GM10248 (cell line): ENCODE measurements at regions of chr11 and their contacts with region 1.

Region 1: DNA sequence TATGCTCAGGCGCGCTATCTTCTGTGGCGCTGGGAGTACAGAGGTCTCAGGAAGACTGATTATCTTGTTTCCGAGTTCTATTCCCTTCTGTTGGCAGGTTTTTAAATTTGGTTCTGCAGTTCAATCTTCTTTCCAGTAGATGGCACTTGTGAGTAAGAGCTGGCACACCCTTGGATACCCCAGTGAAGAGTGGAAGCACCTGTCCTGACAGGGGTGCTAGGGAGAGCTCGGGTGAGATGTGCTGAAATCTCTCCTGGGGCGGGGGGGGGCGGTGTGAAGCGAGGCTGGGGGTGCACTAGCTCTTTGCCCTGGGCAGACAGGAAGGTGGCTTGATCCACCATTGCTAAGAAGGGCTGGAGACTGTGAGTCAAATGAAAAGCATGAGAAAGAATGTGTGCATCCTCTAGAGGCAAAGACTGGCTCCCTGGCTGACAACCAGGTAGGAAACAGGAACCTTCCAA is 679.9 kb upstream of the CCDC179 start:
- DNase-seq: peak; percentile 51
- CTCF ChIP-seq: peak; percentile 73

Region 2: GRCh38 chr11:23425381-23425780 is 114.8 kb before region 1 on chr11:
- CTCF ChIA-PET with region 1: no interaction called
- POLR2A ChIA-PET with region 1: no interaction called
- DNase-seq: no peak
- CTCF ChIP-seq: no peak

Region 3: GRCh38 chr11:23455306-23455891 is 84.7 kb before region 1 on chr11:
- CTCF ChIA-PET with region 1: no interaction called
- POLR2A ChIA-PET with region 1: no interaction called
- DNase-seq: no peak
- CTCF ChIP-seq: no peak

Region 4: DNA sequence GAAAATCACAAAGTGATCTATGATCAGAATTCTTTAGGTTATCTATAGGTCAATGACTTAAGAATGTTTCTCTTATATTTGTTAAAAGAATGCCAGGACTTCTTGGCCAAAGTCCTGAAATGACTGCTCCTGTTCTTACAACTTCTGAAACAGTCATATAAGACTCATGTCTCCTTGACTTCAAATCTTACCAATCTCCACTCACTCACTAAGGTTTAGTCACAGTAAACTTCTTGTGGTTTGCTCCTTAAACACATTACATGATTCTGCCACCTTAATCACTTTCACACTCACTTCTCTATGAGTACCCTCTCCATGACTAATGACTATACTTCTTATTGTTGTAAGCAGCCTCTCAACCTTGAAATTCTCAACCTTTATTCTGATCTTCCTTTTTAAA is 31.1 kb before region 1 on chr11:
- CTCF ChIA-PET with region 1: interaction called, 10 read pairs
- POLR2A ChIA-PET with region 1: no interaction called
- DNase-seq: no peak
- CTCF ChIP-seq: no peak

Region 5: DNA sequence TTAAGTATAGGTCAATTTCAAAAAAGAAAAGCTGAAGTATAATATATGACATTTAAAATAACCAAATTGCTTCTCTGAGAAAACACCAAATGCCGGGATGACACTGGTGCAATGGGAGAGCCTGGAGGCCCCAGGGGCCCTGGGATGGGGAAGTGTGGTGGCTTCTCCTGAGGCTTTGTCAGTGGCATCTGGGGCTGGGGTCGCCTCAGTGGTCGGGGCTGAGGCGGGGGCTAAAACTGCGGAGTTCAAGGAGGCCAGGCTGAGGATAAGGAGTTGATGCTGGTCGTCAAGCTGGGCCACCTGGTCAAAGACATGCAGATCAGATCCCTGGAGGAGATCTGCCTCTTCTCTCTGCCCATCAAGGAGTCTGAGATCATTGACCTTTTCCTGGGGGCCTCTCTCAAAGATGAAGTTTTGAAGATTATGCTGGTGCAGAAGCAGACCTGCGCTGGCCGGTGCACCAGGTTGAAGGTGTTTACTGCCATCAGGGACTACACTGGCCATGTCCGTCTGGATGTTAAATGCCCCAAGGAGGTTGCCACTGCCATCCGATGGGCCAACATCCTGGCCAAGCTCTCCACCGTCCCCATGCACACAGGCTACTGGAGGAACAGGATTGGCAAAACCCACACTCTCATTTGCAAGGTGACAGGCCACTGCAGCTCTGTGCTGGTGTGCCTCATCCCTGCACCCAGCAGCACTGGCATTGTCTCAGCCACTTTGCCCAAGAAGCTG is 19.7 kb before region 1 on chr11:
- CTCF ChIA-PET with region 1: interaction called, 50 read pairs
- POLR2A ChIA-PET with region 1: no interaction called
- DNase-seq: no peak
- CTCF ChIP-seq: no peak

Region 6: DNA sequence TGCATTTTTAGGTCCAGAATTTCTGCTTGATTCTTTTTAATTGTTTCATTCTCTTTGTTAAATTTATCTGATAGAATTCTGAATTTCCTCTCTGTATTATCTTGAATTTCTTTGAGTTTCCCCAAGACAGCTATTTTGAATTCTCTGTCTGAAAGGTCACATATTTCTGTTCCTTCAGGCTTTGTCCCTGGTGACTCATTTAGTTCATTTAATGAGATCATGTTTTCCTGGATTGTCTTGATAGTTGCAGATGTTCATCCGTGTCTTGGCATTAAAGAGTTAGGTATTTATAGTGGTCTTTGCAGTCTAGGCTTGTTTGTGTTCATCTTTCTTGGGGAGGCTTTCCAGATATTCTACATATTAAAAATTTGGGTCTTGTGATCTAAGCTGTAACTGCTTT is 15.0 kb after region 1 on chr11:
- CTCF ChIA-PET with region 1: interaction called, 18 read pairs
- POLR2A ChIA-PET with region 1: no interaction called
- DNase-seq: no peak
- CTCF ChIP-seq: no peak